Ascending aorta (tissue), 2 donors: ENCODE measurements at regions of chr6 and their contacts with region 1.

Region 1: GRCh38 chr6:151240036-151240685 is 394 bp downstream of the AKAP12 start:
- DNase-seq: peak; percentile 31 to 90
- H3K4me3 ChIP-seq: peak overlapping the region; percentile 64 to 86
- H3K27ac ChIP-seq: peak overlapping the region; percentile 86 to 90
- H3K4me1 ChIP-seq: peaks cover 0 to 14% of the 10 kb centered on the region in 2 donors
- H3K27me3 ChIP-seq: no peaks in the 10 kb centered on the region
- CTCF ChIP-seq: peak in 1 of 3 experiments; percentile 33

Region 2: GRCh38 chr6:151021896-151022295 is 218.3 kb before region 1 on chr6:
- intact Hi-C with region 1: loop called (anchors 5 kb)
- DNase-seq: peak in 1 of 2 donors; percentile 44
- H3K4me3 ChIP-seq: no peak overlapping the region
- H3K27ac ChIP-seq: no peak overlapping the region
- H3K4me1 ChIP-seq: peaks cover 0 to 6% of the 10 kb centered on the region in 2 donors
- H3K27me3 ChIP-seq: no peaks in the 10 kb centered on the region
- CTCF ChIP-seq: no peak

Region 3: DNA sequence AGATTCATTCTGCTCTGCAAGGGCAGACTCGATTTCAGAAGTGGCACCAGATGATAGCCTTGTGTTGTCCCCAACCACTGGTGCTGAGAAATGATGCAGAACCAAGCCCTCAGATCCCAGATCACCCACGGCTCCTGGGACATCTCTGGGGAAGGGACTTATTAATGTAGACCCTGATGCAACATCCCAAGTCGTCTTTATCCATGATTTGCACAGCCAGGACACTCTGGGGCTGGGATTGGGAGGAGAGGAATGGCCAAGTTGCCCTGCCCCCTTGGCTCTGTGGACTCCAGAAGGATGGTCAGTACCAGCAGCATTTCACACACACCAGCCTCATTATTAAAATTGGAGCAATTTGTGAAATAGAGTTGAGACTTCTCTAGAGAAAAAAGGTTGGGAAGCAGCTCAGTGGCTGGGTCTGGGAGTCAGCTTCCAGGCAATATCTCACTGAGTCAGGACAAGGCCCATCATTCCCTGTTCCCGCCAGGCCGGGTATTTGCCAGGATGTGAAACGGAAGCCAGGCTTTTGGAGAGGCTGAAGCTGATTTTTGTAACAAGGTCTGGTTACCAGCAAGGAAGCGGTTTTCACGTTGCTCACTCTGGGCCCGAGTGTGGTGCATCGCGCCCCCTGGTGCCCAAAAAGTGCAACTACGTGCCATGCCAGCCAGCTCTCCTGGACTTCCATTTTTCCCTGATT is 83.8 kb after region 1 on chr6:
- intact Hi-C with region 1: loop called (anchors 1 kb)
- DNase-seq: peak; percentile 38 to 92
- H3K4me3 ChIP-seq: peak overlapping the region in 1 of 2 donors; percentile 69
- H3K27ac ChIP-seq: peak overlapping the region; percentile 58 to 59
- H3K4me1 ChIP-seq: peaks cover 5 to 11% of the 10 kb centered on the region in 2 donors
- H3K27me3 ChIP-seq: no peaks in the 10 kb centered on the region
- CTCF ChIP-seq: peak; percentile 92 to 97 (median 95)